ENCODE measurements at regions of chr21 and their contacts with region 1.

Region 1: GRCh38 chr21:33069976-33070811 is at the start of gene OLIG1:
- DNase-seq: no peak
- ATAC-seq: no peak
- H3K4me3 Mint-ChIP-seq: no peak within 1 kb of the TSS
- H3K27ac Mint-ChIP-seq: no peak within 1 kb of the TSS
- H3K4me1 Mint-ChIP-seq: peaks cover 12% of the 10 kb centered on the region
- H3K27me3 Mint-ChIP-seq: peaks cover 69% of the 10 kb centered on the region
- CTCF ChIP-seq: no peak
- total RNA-seq, gene OLIG1: not detected in 2 replicates

Region 2: GRCh38 chr21:33019885-33020557 is 50.2 kb before region 1 on chr21:
- CTCF ChIA-PET with region 1: no interaction called
- POLR2A ChIA-PET with region 1: no interaction called
- intact Hi-C with region 1: loop called (anchors 5 kb)
- DNase-seq: no peak
- ATAC-seq: no peak
- H3K4me3 Mint-ChIP-seq: no peak overlapping the region
- H3K27ac Mint-ChIP-seq: no peak overlapping the region
- H3K4me1 Mint-ChIP-seq: peaks cover 20% of the 10 kb centered on the region
- H3K27me3 Mint-ChIP-seq: peaks cover 73% of the 10 kb centered on the region
- CTCF ChIP-seq: no peak

Region 3: GRCh38 chr21:33036430-33037162 is 33.6 kb before region 1 on chr21:
- CTCF ChIA-PET with region 1: no interaction called
- POLR2A ChIA-PET with region 1: no interaction called
- intact Hi-C with region 1: no loop called
- DNase-seq: no peak
- ATAC-seq: no peak
- H3K4me3 Mint-ChIP-seq: no peak overlapping the region
- H3K27ac Mint-ChIP-seq: no peak overlapping the region
- H3K4me1 Mint-ChIP-seq: peaks cover 2% of the 10 kb centered on the region
- H3K27me3 Mint-ChIP-seq: peaks cover 54% of the 10 kb centered on the region
- CTCF ChIP-seq: no peak